Activated CD8-positive, alpha-beta memory T cell treated with anti-CD3 and anti-CD28 coated beads, Interleukin-2, amount 10 ng/mL, durations not matched to agents 7 days and 5 days (primary cell): ENCODE measurements at regions of chr12 and their contacts with region 1.

Region 1: GRCh38 chr12:32755654-32756475 is at the start of gene YARS2:
- DNase-seq: peak; percentile 95
- ATAC-seq: peak; percentile 93
- H3K4me3 Mint-ChIP-seq: peak within 1 kb of the TSS; percentile 91
- H3K27ac Mint-ChIP-seq: peak within 1 kb of the TSS; percentile 83
- H3K4me1 Mint-ChIP-seq: peaks cover 19% of the 10 kb centered on the region
- H3K27me3 Mint-ChIP-seq: no peaks in the 10 kb centered on the region
- total RNA-seq, gene YARS2: 21.1 to 28.7 TPM

Region 2: GRCh38 chr12:32365473-32366064 is 390.3 kb before region 1 on chr12:
- CTCF ChIA-PET with region 1: interaction called, 14 read pairs
- DNase-seq: peak; percentile 56
- ATAC-seq: no peak
- H3K4me3 Mint-ChIP-seq: no peak overlapping the region
- H3K27ac Mint-ChIP-seq: no peak overlapping the region
- H3K4me1 Mint-ChIP-seq: no peaks in the 10 kb centered on the region
- H3K27me3 Mint-ChIP-seq: no peaks in the 10 kb centered on the region

Region 3: GRCh38 chr12:32522331-32523221 is 233.3 kb before region 1 on chr12:
- CTCF ChIA-PET with region 1: no interaction called
- DNase-seq: no peak
- ATAC-seq: peak; percentile 42
- H3K4me3 Mint-ChIP-seq: no peak overlapping the region
- H3K27ac Mint-ChIP-seq: no peak overlapping the region
- H3K4me1 Mint-ChIP-seq: peaks cover 13% of the 10 kb centered on the region
- H3K27me3 Mint-ChIP-seq: no peaks in the 10 kb centered on the region

Region 4: DNA sequence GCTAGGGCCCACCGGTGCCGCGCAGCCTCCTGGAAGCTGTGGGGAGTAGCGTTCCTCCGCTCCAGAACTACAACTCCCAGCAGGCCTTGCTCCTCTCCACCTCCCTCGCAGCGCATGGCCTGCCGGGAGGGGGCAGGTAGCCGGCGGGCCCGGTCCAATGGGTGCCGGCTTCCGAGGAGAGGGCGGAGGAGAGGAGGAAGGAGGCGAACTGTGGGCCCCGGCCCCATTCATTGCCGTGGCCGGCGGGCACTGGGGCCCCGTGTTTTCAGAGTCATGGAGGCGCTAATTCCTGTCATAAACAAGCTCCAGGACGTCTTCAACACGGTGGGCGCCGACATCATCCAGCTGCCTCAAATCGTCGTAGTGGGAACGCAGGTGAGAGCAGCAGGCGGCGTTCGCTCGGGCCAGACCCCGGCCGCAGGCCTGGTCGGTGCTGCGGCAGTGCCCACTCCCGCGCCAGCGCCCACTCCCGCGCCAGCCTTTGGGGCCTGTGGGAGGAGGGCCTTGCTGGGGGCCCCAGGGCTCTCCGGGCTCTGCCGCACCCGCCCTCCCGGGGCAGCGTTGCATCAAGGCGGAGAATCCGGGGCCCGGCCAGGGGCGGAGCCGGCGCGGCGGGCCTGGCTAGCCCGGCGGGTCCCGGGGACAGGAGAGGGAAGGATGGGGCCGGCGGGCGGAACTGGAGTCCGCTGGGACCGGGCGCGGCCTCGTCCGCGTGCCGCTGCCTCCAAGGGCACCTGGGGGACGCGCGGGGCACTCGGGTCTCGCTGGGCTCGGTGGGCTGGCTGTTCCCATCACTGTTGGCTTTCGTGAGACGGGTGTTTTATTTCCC is 76.6 kb before region 1 on chr12 and contains the start of gene DNM1L:
- CTCF ChIA-PET with region 1: interaction called, 11 read pairs
- DNase-seq: peak; percentile 96
- ATAC-seq: peak; percentile 99
- H3K4me3 Mint-ChIP-seq: peak within 1 kb of the TSS; percentile 88
- H3K27ac Mint-ChIP-seq: peak within 1 kb of the TSS; percentile 87
- H3K4me1 Mint-ChIP-seq: peaks cover 22% of the 10 kb centered on the region
- H3K27me3 Mint-ChIP-seq: no peaks in the 10 kb centered on the region
- total RNA-seq, gene DNM1L: 59.8 to 66.8 TPM

Region 5: DNA sequence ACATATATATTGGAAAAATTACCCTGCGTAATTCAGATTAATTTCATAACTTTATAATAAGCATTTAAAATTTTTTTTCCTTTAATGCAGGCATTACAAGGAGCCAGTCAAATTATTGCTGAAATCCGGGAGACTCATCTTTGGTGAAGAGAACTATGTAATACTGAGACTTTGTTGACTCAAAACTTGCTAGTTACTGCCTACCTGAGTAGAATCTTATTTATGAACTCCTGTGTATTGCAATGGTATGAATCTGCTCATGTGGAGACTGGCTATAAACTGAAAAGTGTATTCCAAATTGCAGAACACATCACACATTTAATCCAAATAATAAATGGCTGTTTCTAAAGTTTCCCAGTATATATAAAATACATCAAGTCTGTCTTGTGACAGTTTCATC is 12.6 kb before region 1 on chr12:
- CTCF ChIA-PET with region 1: interaction called, 11 read pairs
- DNase-seq: no peak
- ATAC-seq: no peak
- H3K4me3 Mint-ChIP-seq: no peak overlapping the region
- H3K27ac Mint-ChIP-seq: no peak overlapping the region
- H3K4me1 Mint-ChIP-seq: no peaks in the 10 kb centered on the region
- H3K27me3 Mint-ChIP-seq: no peaks in the 10 kb centered on the region

Region 6: GRCh38 chr12:32906407-32907165 is 150.7 kb after region 1 on chr12:
- CTCF ChIA-PET with region 1: no interaction called
- DNase-seq: peak; percentile 48
- ATAC-seq: no peak
- H3K4me3 Mint-ChIP-seq: no peak overlapping the region
- H3K27ac Mint-ChIP-seq: no peak overlapping the region
- H3K4me1 Mint-ChIP-seq: peaks cover 9% of the 10 kb centered on the region
- H3K27me3 Mint-ChIP-seq: peaks cover 16% of the 10 kb centered on the region